ENCODE measurements at regions of chr1 and their contacts with region 1.

Region 1: GRCh38 chr1:87379306-87379705 is 50.6 kb downstream of the LMO4 start:
- DNase-seq: no peak
- ATAC-seq: no peak
- H3K4me3 ChIP-seq: no peak overlapping the region
- H3K4me3 Mint-ChIP-seq: no peak overlapping the region
- H3K27ac ChIP-seq: no peak overlapping the region
- H3K27ac Mint-ChIP-seq: no peak overlapping the region
- H3K4me1 ChIP-seq: no peaks in the 10 kb centered on the region
- H3K4me1 Mint-ChIP-seq: no peaks in the 10 kb centered on the region
- H3K27me3 ChIP-seq: no peaks in the 10 kb centered on the region
- H3K27me3 Mint-ChIP-seq: peaks cover 6 to 8% of the 10 kb centered on the region in 2 donors

Region 2: GRCh38 chr1:86753700-86754099 is 625.6 kb before region 1 on chr1:
- CTCF ChIA-PET with region 1: no interaction called
- POLR2A ChIA-PET with region 1: no interaction called
- DNase-seq: peak in 1 of 35 experiments; percentile 28
- ATAC-seq: peak in 3 of 4 experiments; percentile 46 to 64 (median 47)
- H3K4me3 ChIP-seq: no peak overlapping the region
- H3K4me3 Mint-ChIP-seq: no peak overlapping the region
- H3K27ac ChIP-seq: no peak overlapping the region
- H3K27ac Mint-ChIP-seq: no peak overlapping the region
- H3K4me1 ChIP-seq: no peaks in the 10 kb centered on the region
- H3K4me1 Mint-ChIP-seq: no peaks in the 10 kb centered on the region
- H3K27me3 ChIP-seq: peaks cover 0 to 9% of the 10 kb centered on the region in 2 experiments
- H3K27me3 Mint-ChIP-seq: peaks cover 15 to 19% of the 10 kb centered on the region in 2 donors

Region 3: DNA sequence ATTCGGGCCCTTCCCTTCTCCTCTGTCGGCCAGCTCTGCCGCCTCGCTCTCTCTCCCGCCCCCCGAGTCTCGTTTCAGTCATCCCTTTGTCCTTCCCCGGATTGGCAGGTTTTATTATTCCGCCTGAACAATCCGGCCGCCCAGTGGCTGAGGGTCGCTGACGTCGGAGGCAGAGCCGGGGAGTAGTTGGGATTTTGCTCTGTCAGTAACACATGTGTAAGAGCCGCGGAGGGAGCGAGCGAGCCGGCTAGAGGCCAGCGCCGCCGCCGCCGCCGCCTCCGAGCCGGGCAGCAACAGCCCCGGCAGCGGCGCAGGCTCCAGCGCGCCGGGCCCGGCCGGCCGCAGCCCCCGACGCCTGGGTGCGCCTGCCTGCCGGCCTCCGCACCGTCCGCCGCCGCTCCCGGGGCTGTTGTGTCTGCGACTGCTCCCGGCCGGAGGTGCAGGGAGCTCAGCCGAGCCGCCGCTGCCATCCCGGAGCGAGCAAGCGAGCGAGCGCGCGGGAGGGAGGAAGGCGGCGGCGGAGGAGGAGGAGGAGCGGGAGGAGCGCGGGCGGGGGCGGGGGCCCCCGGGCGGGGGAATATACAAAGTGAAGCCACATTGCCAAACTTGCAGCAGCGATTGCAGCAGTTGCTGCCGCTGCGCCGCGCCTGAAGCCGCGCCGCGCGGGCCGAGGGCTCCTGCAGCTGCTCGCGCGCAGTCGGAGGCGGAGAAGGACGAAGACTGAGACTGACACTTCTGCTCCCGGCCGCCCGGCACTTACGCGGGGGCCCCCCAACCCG is 50.8 kb before region 1 on chr1 and contains the start of gene LMO4:
- CTCF ChIA-PET with region 1: no interaction called
- POLR2A ChIA-PET with region 1: interaction called in 1 of 2 experiments, 14 read pairs
- DNase-seq: peak; percentile 54 to 90 (median 74)
- ATAC-seq: peak; percentile 63 to 77 (median 68)
- H3K4me3 ChIP-seq: peak within 1 kb of the TSS; percentile 76 to 78
- H3K4me3 Mint-ChIP-seq: peak within 1 kb of the TSS; percentile 93 to 97 (median 95)
- H3K27ac ChIP-seq: peak within 1 kb of the TSS; percentile 72
- H3K27ac Mint-ChIP-seq: peak within 1 kb of the TSS; percentile 92 to 96
- H3K4me1 ChIP-seq: peaks cover 24 to 27% of the 10 kb centered on the region in 2 experiments
- H3K4me1 Mint-ChIP-seq: peaks cover 43 to 49% (median 48%) of the 10 kb centered on the region in 3 donors
- H3K27me3 ChIP-seq: peaks cover 0 to 23% of the 10 kb centered on the region in 2 experiments
- H3K27me3 Mint-ChIP-seq: peaks cover 0 to 2% of the 10 kb centered on the region in 2 donors
- total RNA-seq, gene LMO4: 14.4 to 26.2 (median 20.2) TPM

Region 4: GRCh38 chr1:87362078-87362833 is 17.1 kb before region 1 on chr1:
- CTCF ChIA-PET with region 1: no interaction called
- POLR2A ChIA-PET with region 1: interaction called in 1 of 2 experiments, 22 read pairs
- DNase-seq: no peak
- ATAC-seq: no peak
- H3K4me3 ChIP-seq: no peak overlapping the region
- H3K4me3 Mint-ChIP-seq: no peak overlapping the region
- H3K27ac ChIP-seq: no peak overlapping the region
- H3K27ac Mint-ChIP-seq: peak overlapping the region in 1 of 2 donors; percentile 1
- H3K4me1 ChIP-seq: no peaks in the 10 kb centered on the region
- H3K4me1 Mint-ChIP-seq: no peaks in the 10 kb centered on the region
- H3K27me3 ChIP-seq: no peaks in the 10 kb centered on the region
- H3K27me3 Mint-ChIP-seq: no peaks in the 10 kb centered on the region

Region 5: DNA sequence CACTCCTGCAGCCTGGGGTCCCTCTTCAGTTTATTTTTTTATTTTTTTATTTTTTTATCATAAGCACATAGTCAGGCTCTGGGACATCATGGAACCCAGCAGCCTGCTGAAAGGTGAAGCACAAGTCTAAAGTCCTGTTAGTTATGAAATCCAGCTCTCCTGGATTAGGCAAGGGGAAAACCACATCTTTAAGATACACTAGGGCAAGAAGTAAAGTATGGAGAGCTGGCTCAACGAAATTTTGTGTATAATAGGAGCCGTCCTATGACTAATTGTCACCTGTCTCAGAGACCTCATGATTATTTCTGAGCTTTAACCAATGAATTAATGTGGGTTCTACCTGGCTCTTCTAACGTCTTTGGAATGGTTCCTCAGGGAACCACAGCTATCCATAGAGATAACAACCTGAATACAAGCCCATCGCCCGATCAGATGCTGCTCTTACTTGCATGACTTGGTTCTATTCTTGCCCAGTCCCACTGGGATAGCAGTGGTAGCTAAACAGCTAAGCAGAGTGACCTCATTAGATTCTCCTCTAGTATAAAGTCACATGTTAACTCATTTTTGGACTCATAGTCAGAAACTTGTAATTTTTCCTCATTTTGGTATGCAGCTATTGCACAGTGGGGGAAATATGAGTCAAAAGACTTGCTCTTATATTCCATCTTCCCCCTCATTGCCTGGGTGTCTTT is 72.1 kb after region 1 on chr1:
- CTCF ChIA-PET with region 1: no interaction called
- POLR2A ChIA-PET with region 1: no interaction called
- DNase-seq: no peak
- ATAC-seq: no peak
- H3K4me3 ChIP-seq: no peak overlapping the region
- H3K4me3 Mint-ChIP-seq: no peak overlapping the region
- H3K27ac ChIP-seq: no peak overlapping the region
- H3K27ac Mint-ChIP-seq: peak overlapping the region in 1 of 2 donors; percentile 44
- H3K4me1 ChIP-seq: peaks cover 0 to 13% of the 10 kb centered on the region in 2 experiments
- H3K4me1 Mint-ChIP-seq: peaks cover 0 to 26% (median 17%) of the 10 kb centered on the region in 3 donors
- H3K27me3 ChIP-seq: no peaks in the 10 kb centered on the region
- H3K27me3 Mint-ChIP-seq: peaks cover 0 to 2% of the 10 kb centered on the region in 2 donors

Measured in T-cell (primary cell).